Activated T-helper 2 cell treated with anti-CD3 and anti-CD28 coated beads, Interferon-gamma antibody, Interleukin-2, Interleukin-4, amounts not matched to agents 10 μg/mL and 5 μg/mL and 100 μg/mL, durations not matched to agents 14 hours and 24 hours and 36 hours (primary cell): ENCODE measurements at regions of chr17 and their contacts with region 1.

Region 1: GRCh38 chr17:79970576-79971068 is 65.0 kb downstream of the TBC1D16 start:
- DNase-seq: no peak
- H3K4me3 Mint-ChIP-seq: no peak overlapping the region
- H3K27ac Mint-ChIP-seq: no peak overlapping the region
- H3K4me1 Mint-ChIP-seq: no peaks in the 10 kb centered on the region
- H3K27me3 Mint-ChIP-seq: peaks cover 4% of the 10 kb centered on the region

Region 2: GRCh38 chr17:79789534-79790353 is 180.9 kb before region 1 on chr17:
- intact Hi-C with region 1: loop called (anchors 2 kb)
- DNase-seq: no peak
- H3K4me3 Mint-ChIP-seq: no peak overlapping the region
- H3K27ac Mint-ChIP-seq: no peak overlapping the region
- H3K4me1 Mint-ChIP-seq: peaks cover 1% of the 10 kb centered on the region
- H3K27me3 Mint-ChIP-seq: peaks cover 49% of the 10 kb centered on the region